ENCODE measurements at regions of chr19 and their contacts with region 1.

Region 1: GRCh38 chr19:35248307-35249145 is at the start of gene LSR:
- DNase-seq: peak; percentile 88 to 93
- H3K4me3 ChIP-seq: peak within 1 kb of the TSS; percentile 44 to 96 (median 72)
- H3K27ac ChIP-seq: peak within 1 kb of the TSS; percentile 100
- H3K4me1 ChIP-seq: peaks cover 0 to 12% (median 8%) of the 10 kb centered on the region in 4 experiments; a peak in 6 of 7 replicates
- H3K27me3 ChIP-seq: no peaks in the 10 kb centered on the region
- CTCF ChIP-seq: peak in 1 of 3 experiments; percentile 19; a peak in 1 of 4 replicates
- EP300 ChIP-seq: peak in 1 of 2 experiments; percentile 97; a peak in 2 of 3 replicates
- POLR2A ChIP-seq: peak; percentile 99
- RAD21 ChIP-seq: peak in 1 of 2 experiments; percentile 15; a peak in 1 of 4 replicates
- total RNA-seq, gene LSR: 159 and 166 TPM in 2 replicates

Region 2: GRCh38 chr19:35162471-35163326 is 85.8 kb before region 1 on chr19:
- CTCF ChIA-PET with region 1: no interaction called
- POLR2A ChIA-PET with region 1: no interaction called
- DNase-seq: no peak
- H3K4me3 ChIP-seq: no peak overlapping the region
- H3K27ac ChIP-seq: no peak overlapping the region
- H3K4me1 ChIP-seq: no peaks in the 10 kb centered on the region
- H3K27me3 ChIP-seq: no peaks in the 10 kb centered on the region
- CTCF ChIP-seq: no peak
- EP300 ChIP-seq: no peak
- POLR2A ChIP-seq: no peak
- RAD21 ChIP-seq: no peak

Region 3: GRCh38 chr19:35202722-35203688 is 45.5 kb before region 1 on chr19:
- CTCF ChIA-PET with region 1: no interaction called
- POLR2A ChIA-PET with region 1: interaction called, 10 read pairs
- DNase-seq: peak in 1 of 2 experiments; percentile 75
- H3K4me3 ChIP-seq: peak overlapping the region in 1 of 4 experiments; percentile 40; a peak in 1 of 8 replicates
- H3K27ac ChIP-seq: peak overlapping the region; percentile 74
- H3K4me1 ChIP-seq: peaks cover 9 to 32% (median 16%) of the 10 kb centered on the region in 4 experiments
- H3K27me3 ChIP-seq: peaks cover 0 to 2% (median 0%) of the 10 kb centered on the region in 4 experiments; a peak in 1 of 7 replicates
- CTCF ChIP-seq: no peak
- EP300 ChIP-seq: no peak
- POLR2A ChIP-seq: no peak
- RAD21 ChIP-seq: no peak

Region 4: DNA sequence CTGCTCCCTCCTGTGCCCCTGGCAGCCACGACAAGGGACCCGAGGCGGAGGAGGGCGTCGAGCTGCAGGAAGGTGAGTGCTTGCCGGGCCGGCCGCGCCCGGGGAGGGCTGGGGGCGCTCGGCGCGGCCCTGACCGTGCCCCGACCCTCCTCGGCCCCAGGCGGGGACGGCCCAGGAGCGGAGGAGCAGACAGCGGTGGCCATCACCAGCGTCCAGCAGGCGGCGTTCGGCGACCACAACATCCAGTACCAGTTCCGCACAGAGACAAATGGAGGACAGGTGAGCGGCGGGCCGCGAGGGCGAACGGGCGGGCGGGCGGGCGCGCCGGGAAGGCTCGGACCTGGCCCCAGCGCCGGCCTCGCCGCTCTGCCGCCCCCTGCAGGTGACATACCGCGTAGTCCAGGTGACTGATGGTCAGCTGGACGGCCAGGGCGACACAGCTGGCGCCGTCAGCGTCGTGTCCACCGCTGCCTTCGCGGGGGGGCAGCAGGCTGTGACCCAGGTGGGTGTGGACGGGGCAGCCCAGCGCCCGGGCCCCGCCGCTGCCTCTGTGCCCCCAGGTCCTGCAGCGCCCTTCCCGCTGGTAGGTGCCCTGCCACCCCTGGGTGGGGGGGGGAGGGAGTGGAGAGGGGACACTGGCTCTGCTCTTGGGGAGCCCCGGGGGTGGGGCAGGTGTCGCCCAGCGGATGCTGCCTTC is 21.0 kb after region 1 on chr19:
- CTCF ChIA-PET with region 1: interaction called, 4 read pairs
- POLR2A ChIA-PET with region 1: interaction called, 146 read pairs
- DNase-seq: peak in 1 of 2 experiments; percentile 97
- H3K4me3 ChIP-seq: peak overlapping the region; percentile 32 to 68 (median 59)
- H3K27ac ChIP-seq: peak overlapping the region; percentile 93
- H3K4me1 ChIP-seq: peaks cover 0 to 14% (median 8%) of the 10 kb centered on the region in 4 experiments; a peak in 5 of 7 replicates
- H3K27me3 ChIP-seq: no peaks in the 10 kb centered on the region
- CTCF ChIP-seq: peak; percentile 46 to 72 (median 66)
- EP300 ChIP-seq: no peak
- POLR2A ChIP-seq: peak in 1 of 2 experiments; percentile 50; a peak in 2 of 3 replicates
- RAD21 ChIP-seq: peak; percentile 62 to 63

Region 5: GRCh38 chr19:35306473-35307246 is 58.1 kb after region 1 on chr19:
- CTCF ChIA-PET with region 1: no interaction called
- POLR2A ChIA-PET with region 1: no interaction called
- DNase-seq: no peak
- H3K4me3 ChIP-seq: no peak overlapping the region
- H3K27ac ChIP-seq: no peak overlapping the region
- H3K4me1 ChIP-seq: peaks cover 0 to 2% (median 0%) of the 10 kb centered on the region in 4 experiments; a peak in 1 of 7 replicates
- H3K27me3 ChIP-seq: no peaks in the 10 kb centered on the region
- CTCF ChIP-seq: peak; percentile 70 to 84 (median 72)
- EP300 ChIP-seq: no peak
- POLR2A ChIP-seq: no peak
- RAD21 ChIP-seq: peak; percentile 58 to 66

Measured in H1 (cell line).